ENCODE measurements at regions of chr10 and their contacts with region 1.

Region 1: DNA sequence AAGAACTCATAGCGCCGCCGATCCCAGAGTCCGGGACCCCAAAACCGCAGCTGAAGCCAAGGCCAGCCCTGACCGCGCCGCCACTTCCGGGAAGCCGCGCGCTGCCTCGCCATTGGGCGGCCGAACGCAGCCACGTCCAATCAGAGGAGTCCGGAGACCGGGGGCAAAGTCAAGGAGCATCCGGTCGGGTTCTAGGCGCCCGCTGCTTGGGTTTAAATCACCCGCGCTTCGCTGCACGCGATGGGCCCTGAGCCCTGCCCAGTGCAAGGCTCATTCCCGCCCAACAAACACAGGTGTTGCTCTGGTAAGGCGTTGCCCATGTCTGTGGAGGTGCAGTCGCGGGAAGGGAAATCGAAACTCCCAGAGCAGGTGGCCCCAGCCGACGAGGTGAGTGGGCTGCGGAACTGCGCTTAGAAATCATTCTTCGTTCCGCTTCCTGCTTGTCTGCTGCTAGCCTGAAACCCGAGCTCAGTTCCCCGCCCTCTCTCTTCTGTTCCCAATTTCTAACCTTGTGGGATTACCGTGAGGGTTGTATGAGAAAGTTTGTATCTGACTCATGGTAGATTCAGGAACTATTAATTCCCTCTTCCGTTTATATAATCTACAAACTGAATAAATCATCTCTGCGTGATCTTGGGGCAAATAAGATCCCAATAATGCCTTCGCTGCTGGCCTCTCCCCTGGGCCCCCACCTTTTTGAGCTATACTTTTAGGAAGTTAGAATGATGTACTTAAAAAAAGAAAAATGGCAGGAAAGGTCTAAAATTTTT is at the start of gene DCLRE1C:
- DNase-seq: peak; percentile 93
- H3K4me3 Mint-ChIP-seq: peak within 1 kb of the TSS; percentile 87
- H3K27ac Mint-ChIP-seq: peak within 1 kb of the TSS; percentile 93
- H3K4me1 Mint-ChIP-seq: peaks cover 64% of the 10 kb centered on the region
- H3K27me3 Mint-ChIP-seq: no peaks in the 10 kb centered on the region
- total RNA-seq, gene DCLRE1C: 36.8 to 40.4 TPM

Region 2: GRCh38 chr10:14904316-14904732 is 49.9 kb before region 1 on chr10:
- CTCF ChIA-PET with region 1: no interaction called
- POLR2A ChIA-PET with region 1: interaction called, 12 read pairs
- DNase-seq: no peak
- H3K4me3 Mint-ChIP-seq: no peak overlapping the region
- H3K27ac Mint-ChIP-seq: no peak overlapping the region
- H3K4me1 Mint-ChIP-seq: peaks cover 13% of the 10 kb centered on the region
- H3K27me3 Mint-ChIP-seq: no peaks in the 10 kb centered on the region

Measured in activated CD4-positive, alpha-beta memory T cell treated with anti-CD3 and anti-CD28 coated beads, Interleukin-2, amount 10 ng/mL, durations not matched to agents 7 days and 5 days (primary cell).